Activated CD8-positive, alpha-beta T cell treated with anti-CD3 and anti-CD28 coated beads, Interleukin-2, amount 10 ng/mL, durations not matched to agents 7 days and 5 days (primary cell): ENCODE measurements at regions of chr17 and their contacts with region 1.

Region 1: GRCh38 chr17:38982858-38983746 is 15.9 kb upstream of the FBXO47 start:
- DNase-seq: peak; percentile 71
- ATAC-seq: peak; percentile 64
- H3K4me3 Mint-ChIP-seq: no peak overlapping the region
- H3K27ac Mint-ChIP-seq: no peak overlapping the region
- H3K4me1 Mint-ChIP-seq: peaks cover 5% of the 10 kb centered on the region
- H3K27me3 Mint-ChIP-seq: peaks cover 8% of the 10 kb centered on the region

Region 2: DNA sequence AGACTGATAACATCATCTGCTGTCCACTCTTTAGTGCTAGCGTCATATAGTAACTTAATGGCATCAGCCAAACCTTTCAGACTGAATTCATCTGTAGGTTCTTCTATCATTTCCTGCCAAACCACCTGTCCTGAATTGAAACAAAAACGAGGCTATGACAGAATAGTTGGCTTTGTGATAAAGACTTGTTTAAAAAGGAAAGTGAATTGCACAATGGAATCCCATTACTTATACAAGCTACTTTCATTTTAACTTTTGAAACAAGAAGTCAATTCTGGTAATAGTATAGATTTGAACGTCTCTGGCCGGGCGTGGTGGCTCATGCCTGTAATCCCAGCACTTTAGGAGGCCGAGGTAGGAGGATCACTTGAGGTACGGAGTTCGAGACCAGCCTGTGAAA is 39.5 kb before region 1 on chr17:
- CTCF ChIA-PET with region 1: interaction called, 10 read pairs
- POLR2A ChIA-PET with region 1: no interaction called
- DNase-seq: no peak
- ATAC-seq: no peak
- H3K4me3 Mint-ChIP-seq: no peak overlapping the region
- H3K27ac Mint-ChIP-seq: no peak overlapping the region
- H3K4me1 Mint-ChIP-seq: peaks cover 8% of the 10 kb centered on the region
- H3K27me3 Mint-ChIP-seq: peaks cover 5% of the 10 kb centered on the region

Region 3: DNA sequence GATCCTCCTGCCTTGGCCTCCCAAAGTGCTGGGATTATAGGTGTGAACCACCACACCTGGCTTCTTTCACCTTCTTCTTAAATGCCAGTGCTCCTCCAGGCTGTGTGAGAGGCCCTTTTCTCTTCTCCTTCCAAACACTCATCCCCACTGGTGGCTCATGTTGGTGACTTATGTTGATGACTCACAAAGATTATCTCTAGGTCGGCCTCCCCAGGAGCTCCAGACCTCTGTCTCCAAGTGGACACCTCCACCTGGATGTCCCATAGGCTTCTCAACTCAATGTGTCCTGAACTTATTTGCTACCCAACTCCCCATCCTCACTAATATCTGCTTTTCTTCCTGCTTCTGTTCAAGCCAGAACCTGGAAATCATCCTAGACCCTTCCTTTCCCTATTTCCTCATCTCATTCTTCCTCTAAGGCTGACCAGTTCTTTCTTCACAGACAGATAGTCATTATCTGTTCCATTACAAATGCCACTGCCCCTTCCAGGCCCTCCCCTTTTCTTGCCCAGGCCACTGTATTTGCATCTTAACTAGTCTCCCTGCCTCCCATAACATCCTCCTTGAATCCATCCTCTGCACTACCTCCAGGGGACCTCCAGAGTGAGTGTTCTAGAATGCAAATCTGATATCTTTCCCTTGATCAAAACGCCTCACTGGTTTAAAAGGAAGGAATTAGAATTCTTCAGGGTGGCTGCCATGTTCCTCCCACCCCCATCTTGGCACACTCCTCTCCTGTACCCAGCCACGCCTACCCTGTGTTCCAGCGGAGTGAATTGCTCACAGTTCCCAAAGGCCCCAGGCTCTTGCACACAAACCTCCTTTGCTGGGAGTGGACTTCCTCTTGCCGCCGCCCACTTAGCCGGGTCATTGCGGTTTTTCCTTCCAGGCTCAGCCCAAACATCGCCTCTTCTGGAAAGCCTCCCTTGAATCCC is 18.9 kb after region 1 on chr17:
- CTCF ChIA-PET with region 1: interaction called, 27 read pairs
- POLR2A ChIA-PET with region 1: no interaction called
- DNase-seq: no peak
- ATAC-seq: no peak
- H3K4me3 Mint-ChIP-seq: no peak overlapping the region
- H3K27ac Mint-ChIP-seq: no peak overlapping the region
- H3K4me1 Mint-ChIP-seq: peaks cover 15% of the 10 kb centered on the region
- H3K27me3 Mint-ChIP-seq: peaks cover 4% of the 10 kb centered on the region

Region 4: DNA sequence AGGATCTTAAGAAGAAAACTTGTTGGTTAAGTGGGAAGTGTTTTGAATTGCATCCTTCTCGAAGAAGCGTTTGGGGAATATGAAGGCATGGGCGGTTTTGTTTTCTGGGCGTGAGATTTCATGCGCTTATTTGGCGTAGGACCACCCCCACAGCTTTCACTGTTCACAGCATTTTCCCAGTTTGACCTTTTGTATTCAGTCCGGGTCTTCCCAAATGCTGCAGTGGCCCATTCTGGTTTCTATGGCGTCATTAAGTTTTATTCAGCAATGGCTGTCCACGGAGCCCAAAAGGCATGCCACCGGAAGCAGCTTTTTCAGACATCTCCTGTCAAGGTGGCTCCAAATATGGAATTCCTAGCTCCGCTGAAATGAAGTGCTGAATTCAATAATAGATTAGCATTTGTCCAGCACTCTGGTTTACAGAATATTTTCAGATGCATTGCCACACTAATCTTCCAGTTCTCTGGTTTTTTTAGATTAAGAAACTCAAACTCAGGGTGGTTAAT is 74.7 kb after region 1 on chr17:
- CTCF ChIA-PET with region 1: interaction called, 24 read pairs
- POLR2A ChIA-PET with region 1: no interaction called
- DNase-seq: no peak
- ATAC-seq: no peak
- H3K4me3 Mint-ChIP-seq: peak overlapping the region; percentile 78
- H3K27ac Mint-ChIP-seq: peak overlapping the region; percentile 85
- H3K4me1 Mint-ChIP-seq: peaks cover 19% of the 10 kb centered on the region
- H3K27me3 Mint-ChIP-seq: peaks cover 10% of the 10 kb centered on the region

Region 5: GRCh38 chr17:39096508-39097149 is 113.5 kb after region 1 on chr17:
- CTCF ChIA-PET with region 1: interaction called, 27 read pairs
- POLR2A ChIA-PET with region 1: interaction called, 3 read pairs
- DNase-seq: peak; percentile 81
- ATAC-seq: peak; percentile 55
- H3K4me3 Mint-ChIP-seq: peak overlapping the region; percentile 67
- H3K27ac Mint-ChIP-seq: peak overlapping the region; percentile 92
- H3K4me1 Mint-ChIP-seq: peaks cover 65% of the 10 kb centered on the region
- H3K27me3 Mint-ChIP-seq: peaks cover 3% of the 10 kb centered on the region

Region 6: GRCh38 chr17:39164675-39165143 is 181.6 kb after region 1 on chr17:
- CTCF ChIA-PET with region 1: interaction called, 92 read pairs
- POLR2A ChIA-PET with region 1: no interaction called
- DNase-seq: peak; percentile 88
- ATAC-seq: peak; percentile 96
- H3K4me3 Mint-ChIP-seq: peak overlapping the region; percentile 83
- H3K27ac Mint-ChIP-seq: peak overlapping the region; percentile 60
- H3K4me1 Mint-ChIP-seq: peaks cover 40% of the 10 kb centered on the region
- H3K27me3 Mint-ChIP-seq: peaks cover 17% of the 10 kb centered on the region

Region 7: GRCh38 chr17:39235555-39236449 is 252.7 kb after region 1 on chr17:
- CTCF ChIA-PET with region 1: interaction called, 35 read pairs
- POLR2A ChIA-PET with region 1: no interaction called
- DNase-seq: peak; percentile 76
- ATAC-seq: peak; percentile 70
- H3K4me3 Mint-ChIP-seq: no peak overlapping the region
- H3K27ac Mint-ChIP-seq: no peak overlapping the region
- H3K4me1 Mint-ChIP-seq: peaks cover 33% of the 10 kb centered on the region
- H3K27me3 Mint-ChIP-seq: peaks cover 3% of the 10 kb centered on the region